ENCODE measurements at regions of chr16 and their contacts with region 1.

Region 1: DNA sequence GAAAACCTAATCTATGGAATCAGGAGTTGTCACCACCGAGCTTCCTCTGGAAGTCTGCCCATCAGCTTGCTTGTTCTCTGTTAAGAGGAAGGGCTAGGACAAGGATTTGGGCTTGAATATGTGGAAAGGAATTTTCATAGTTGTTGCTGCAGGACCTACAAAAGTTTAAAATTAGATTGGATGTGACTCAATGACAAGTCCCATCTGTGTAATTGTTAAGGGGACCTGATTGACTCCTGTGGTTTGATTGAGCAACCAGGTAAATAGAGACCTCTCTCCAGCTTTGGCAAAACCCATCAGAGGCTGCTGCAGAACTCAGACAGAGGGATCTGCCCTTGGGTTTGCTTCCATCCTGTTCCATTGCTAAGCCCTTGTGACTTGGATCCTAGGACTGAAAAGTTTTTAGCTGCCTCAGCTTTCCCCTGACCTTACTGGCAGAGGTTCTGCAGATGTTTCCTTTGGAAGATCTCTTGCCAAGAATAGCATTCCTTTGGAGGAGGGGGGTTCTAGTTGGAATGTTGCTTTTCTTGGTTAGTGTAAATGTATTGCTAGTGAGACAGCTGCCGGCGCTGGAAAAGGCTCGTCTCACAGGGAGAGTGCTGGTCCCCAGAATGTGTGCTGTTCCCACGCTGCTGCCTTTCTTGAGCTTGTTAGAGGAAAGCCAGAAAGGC is 50.0 kb downstream of the SF3B3 start:
- DNase-seq: peak; percentile 94
- H3K4me3 ChIP-seq: no peak overlapping the region
- H3K27ac ChIP-seq: peak overlapping the region; percentile 89
- H3K27me3 ChIP-seq: no peaks in the 10 kb centered on the region
- CTCF ChIP-seq: no peak

Region 2: GRCh38 chr16:70553645-70554044 is 19.9 kb before region 1 on chr16:
- CTCF ChIA-PET with region 1: interaction called, 3 read pairs
- POLR2A ChIA-PET with region 1: interaction called, 22 read pairs
- DNase-seq: peak; percentile 85
- H3K4me3 ChIP-seq: no peak overlapping the region
- H3K27ac ChIP-seq: peak overlapping the region; percentile 94
- H3K27me3 ChIP-seq: no peaks in the 10 kb centered on the region
- CTCF ChIP-seq: no peak

Region 3: GRCh38 chr16:70635336-70636016 is 61.9 kb after region 1 on chr16:
- CTCF ChIA-PET with region 1: interaction called, 4 read pairs
- POLR2A ChIA-PET with region 1: interaction called, 12 read pairs
- DNase-seq: peak; percentile 51
- H3K4me3 ChIP-seq: peak overlapping the region; percentile 5
- H3K27ac ChIP-seq: peak overlapping the region; percentile 97
- H3K27me3 ChIP-seq: no peaks in the 10 kb centered on the region
- CTCF ChIP-seq: no peak

Region 4: DNA sequence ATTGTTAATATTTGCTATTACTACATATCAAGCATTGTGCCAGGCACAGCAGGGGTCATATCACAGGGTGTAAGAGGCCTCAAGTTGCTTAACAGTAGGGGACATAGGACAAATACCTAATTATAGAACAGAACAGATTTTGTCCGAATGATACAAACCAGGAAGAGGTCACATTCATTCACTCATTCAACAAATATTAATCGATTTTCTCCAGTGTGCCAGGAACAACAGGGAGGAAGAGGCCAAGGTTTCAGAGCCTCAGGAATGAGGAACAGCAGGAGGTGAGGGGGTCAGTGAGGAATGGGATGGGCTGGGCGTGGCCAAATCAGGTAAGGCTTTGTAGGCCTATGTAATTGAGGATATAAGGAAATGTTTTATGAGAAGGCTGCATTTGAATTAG is 941.4 kb after region 1 on chr16:
- CTCF ChIA-PET with region 1: no interaction called
- POLR2A ChIA-PET with region 1: no interaction called
- DNase-seq: no peak
- H3K4me3 ChIP-seq: no peak overlapping the region
- H3K27ac ChIP-seq: no peak overlapping the region
- H3K27me3 ChIP-seq: no peaks in the 10 kb centered on the region
- CTCF ChIP-seq: no peak

Region 5: GRCh38 chr16:71526111-71526631 is 952.6 kb after region 1 on chr16 and contains the start of gene CHST4:
- CTCF ChIA-PET with region 1: no interaction called
- POLR2A ChIA-PET with region 1: no interaction called
- DNase-seq: peak; percentile 27
- H3K4me3 ChIP-seq: no peak within 1 kb of the TSS
- H3K27ac ChIP-seq: no peak within 1 kb of the TSS
- H3K27me3 ChIP-seq: no peaks in the 10 kb centered on the region
- CTCF ChIP-seq: no peak
- polyA plus RNA-seq, gene CHST4: not detected in 2 replicates

Measured in AG04450 (cell line).